ENCODE measurements at regions of chr9 and their contacts with region 1.

Region 1: GRCh38 chr9:73183917-73184861 is 32.5 kb downstream of the ANXA1 start:
- DNase-seq: peak; percentile 8
- H3K4me3 ChIP-seq: no peak overlapping the region
- H3K27ac ChIP-seq: no peak overlapping the region
- H3K27me3 ChIP-seq: no peaks in the 10 kb centered on the region
- CTCF ChIP-seq: peak; percentile 44

Region 2: GRCh38 chr9:73116031-73116430 is 68.2 kb before region 1 on chr9:
- CTCF ChIA-PET with region 1: interaction called, 228 read pairs
- POLR2A ChIA-PET with region 1: no interaction called
- DNase-seq: peak; percentile 7
- H3K4me3 ChIP-seq: no peak overlapping the region
- H3K27ac ChIP-seq: no peak overlapping the region
- H3K27me3 ChIP-seq: no peaks in the 10 kb centered on the region
- CTCF ChIP-seq: no peak

Region 3: DNA sequence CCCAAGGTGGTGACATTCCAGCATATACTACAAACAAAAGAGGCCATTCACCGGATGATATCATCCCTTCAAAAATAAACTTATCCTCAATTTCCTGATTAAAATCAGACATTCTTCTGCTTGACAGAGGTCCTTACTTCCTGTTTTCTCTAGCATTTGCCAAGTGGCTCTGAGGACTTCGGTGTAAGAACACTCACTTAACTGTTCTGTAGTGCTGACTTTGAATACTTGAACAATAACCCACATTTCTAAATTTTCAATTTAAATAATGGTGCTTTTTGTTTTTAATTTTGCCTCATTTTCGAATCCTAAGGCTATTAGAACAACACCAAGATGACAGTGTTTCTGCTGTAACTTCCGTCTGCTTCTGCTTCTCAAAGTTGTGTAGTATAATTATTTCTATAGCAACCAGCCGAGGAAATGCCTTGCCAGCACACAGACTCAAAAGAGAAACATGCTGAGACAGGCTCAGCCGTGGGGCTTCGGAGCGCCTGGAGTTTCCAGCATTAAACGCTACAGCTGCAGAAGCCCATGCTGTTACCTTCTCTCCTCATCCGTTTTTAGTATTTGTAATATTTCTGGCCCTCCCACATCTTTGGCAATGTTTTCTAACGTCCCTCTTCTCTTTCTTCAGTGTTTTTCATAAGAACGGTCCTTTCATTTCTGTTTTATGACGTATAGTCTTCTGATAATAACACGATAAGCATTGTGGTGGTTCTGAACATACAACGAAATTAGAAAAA is 52.0 kb before region 1 on chr9:
- CTCF ChIA-PET with region 1: interaction called, 14 read pairs
- POLR2A ChIA-PET with region 1: no interaction called
- DNase-seq: no peak
- H3K4me3 ChIP-seq: peak overlapping the region; percentile 60
- H3K27ac ChIP-seq: peak overlapping the region; percentile 86
- H3K27me3 ChIP-seq: no peaks in the 10 kb centered on the region
- CTCF ChIP-seq: no peak

Region 4: GRCh38 chr9:73154760-73155159 is 29.4 kb before region 1 on chr9:
- CTCF ChIA-PET with region 1: interaction called, 13 read pairs
- POLR2A ChIA-PET with region 1: no interaction called
- DNase-seq: no peak
- H3K4me3 ChIP-seq: peak overlapping the region; percentile 72; the same call in 1 of the 2 replicates
- H3K27ac ChIP-seq: no peak overlapping the region
- H3K27me3 ChIP-seq: no peaks in the 10 kb centered on the region
- CTCF ChIP-seq: no peak

Region 5: DNA sequence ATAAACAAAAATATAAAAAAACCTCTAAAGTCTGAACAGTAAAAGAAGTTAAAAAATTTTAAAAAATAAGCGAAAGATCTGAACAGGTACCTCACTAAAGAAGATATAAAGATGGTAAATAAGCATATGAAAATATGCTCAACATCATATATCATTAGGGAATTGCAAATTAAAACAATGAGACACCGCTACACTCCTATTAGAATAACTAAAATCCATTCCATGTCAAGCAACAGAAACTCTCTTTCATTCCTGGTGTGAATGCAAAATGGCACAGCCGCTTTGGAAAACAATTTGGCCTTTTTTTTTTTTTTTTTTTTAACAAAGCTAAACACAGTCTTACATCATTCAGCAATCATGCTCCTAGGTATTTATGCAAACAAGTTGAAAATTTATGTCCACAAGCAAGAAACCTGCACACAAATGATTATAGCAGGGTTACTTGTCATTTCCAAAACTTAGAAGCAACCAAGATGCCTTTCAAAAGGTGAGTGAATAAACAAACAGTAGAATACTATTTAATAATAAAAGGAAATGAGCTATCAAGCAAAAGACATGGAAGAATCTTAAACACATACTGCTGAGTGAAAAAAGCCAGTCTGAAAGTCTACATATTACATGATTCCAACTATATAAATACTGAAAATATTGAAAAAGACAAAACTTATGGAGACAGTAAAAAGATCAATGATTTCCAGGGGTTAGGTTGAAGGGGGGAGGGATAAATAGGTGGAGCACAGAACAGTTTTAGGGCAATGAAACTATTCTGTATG is 10.4 kb before region 1 on chr9:
- CTCF ChIA-PET with region 1: interaction called, 19 read pairs
- POLR2A ChIA-PET with region 1: no interaction called
- DNase-seq: no peak
- H3K4me3 ChIP-seq: no peak overlapping the region
- H3K27ac ChIP-seq: no peak overlapping the region
- H3K27me3 ChIP-seq: no peaks in the 10 kb centered on the region
- CTCF ChIP-seq: no peak

Region 6: DNA sequence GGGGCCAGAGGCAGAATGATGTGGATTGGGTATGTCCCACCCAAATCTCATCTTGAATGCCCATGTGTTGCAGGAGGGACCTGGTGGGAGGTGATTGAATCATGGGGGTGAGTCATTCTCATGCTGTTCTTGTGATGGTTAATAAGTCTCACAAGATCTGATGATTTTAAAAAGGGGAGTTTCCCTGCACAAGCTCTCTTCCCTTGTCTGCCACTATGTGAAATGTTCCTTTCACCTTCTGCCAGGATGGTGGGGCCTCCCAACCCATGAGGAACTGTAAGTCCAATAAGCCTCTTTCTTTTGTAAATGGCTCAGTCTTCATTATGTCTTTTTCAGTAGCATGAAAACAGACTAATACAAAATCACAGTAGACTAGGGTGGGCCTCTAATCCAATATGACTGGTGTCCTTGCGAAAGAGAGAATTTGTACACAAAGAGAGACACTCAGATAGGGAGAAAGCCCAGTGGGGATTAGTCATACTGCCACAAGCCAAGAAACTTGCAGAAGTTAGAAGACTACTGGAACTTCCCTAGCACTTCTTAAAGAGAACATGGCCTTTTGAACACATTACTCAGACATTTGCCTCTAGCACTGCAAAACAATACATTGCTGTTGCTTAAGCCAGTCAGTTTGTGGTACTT is 35.9 kb after region 1 on chr9:
- CTCF ChIA-PET with region 1: no interaction called
- POLR2A ChIA-PET with region 1: no interaction called
- DNase-seq: no peak
- H3K4me3 ChIP-seq: no peak overlapping the region
- H3K27ac ChIP-seq: no peak overlapping the region
- H3K27me3 ChIP-seq: no peaks in the 10 kb centered on the region
- CTCF ChIP-seq: no peak

Region 7: GRCh38 chr9:73294336-73294735 is 110.1 kb after region 1 on chr9:
- CTCF ChIA-PET with region 1: no interaction called
- POLR2A ChIA-PET with region 1: no interaction called
- DNase-seq: no peak
- H3K4me3 ChIP-seq: no peak overlapping the region
- H3K27ac ChIP-seq: no peak overlapping the region
- H3K27me3 ChIP-seq: no peaks in the 10 kb centered on the region
- CTCF ChIP-seq: no peak